SK-MEL-5 (cell line): ENCODE measurements at regions of chr13 and their contacts with region 1.

Region 1: GRCh38 chr13:20411638-20412360 is 113.9 kb downstream of the CRYL1 start:
- DNase-seq: no peak

Region 2: GRCh38 chr13:20182231-20182846 is 229.5 kb before region 1 on chr13:
- in situ Hi-C with region 1: loop called (anchors 25 kb)
- DNase-seq: peak; percentile 89